ENCODE measurements at regions of chr11 and their contacts with region 1.

Region 1: DNA sequence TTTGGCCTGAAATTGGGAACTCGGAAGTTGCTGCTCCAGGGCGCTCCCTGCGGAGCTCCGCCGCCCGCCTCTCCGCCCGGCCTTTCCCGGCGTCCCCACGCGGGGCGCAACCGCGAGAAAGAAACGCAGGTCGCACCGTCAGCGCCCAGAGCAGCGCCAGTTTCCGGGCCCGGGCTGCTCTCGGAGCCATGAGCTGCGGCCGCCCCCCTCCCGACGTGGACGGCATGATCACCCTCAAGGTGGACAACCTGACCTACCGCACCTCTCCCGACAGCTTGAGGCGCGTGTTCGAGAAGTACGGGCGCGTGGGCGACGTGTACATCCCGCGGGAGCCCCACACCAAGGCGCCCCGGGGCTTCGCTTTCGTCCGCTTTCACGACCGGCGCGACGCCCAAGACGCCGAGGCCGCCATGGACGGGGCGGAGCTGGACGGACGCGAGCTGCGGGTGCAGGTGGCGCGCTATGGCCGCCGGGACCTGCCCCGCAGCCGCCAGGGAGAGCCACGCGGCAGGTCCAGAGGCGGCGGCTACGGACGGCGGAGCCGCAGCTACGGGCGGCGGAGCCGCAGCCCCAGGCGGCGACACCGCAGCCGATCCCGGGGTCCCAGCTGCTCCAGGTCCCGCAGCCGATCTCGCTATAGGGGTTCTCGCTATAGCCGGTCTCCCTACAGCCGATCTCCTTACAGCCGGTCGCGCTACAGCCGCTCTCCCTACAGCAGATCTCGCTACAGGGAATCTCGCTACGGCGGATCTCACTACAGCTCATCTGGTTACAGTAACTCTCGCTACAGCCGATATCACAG is 521 bp downstream of the SRSF8 start:
- DNase-seq: peak; percentile 82
- H3K4me3 Mint-ChIP-seq: peak overlapping the region; percentile 96
- H3K27ac Mint-ChIP-seq: peak overlapping the region; percentile 91
- H3K4me1 Mint-ChIP-seq: peaks cover 8% of the 10 kb centered on the region
- H3K27me3 Mint-ChIP-seq: no peaks in the 10 kb centered on the region
- CTCF ChIP-seq: peak; percentile 42

Region 2: GRCh38 chr11:94973099-94973968 is 93.9 kb before region 1 on chr11 and contains the starts of genes CWC15 and KDM4D:
- CTCF ChIA-PET with region 1: interaction called, 3 read pairs
- intact Hi-C with region 1: loop called (anchors 2 kb)
- DNase-seq: peak; percentile 88
- H3K4me3 Mint-ChIP-seq: peak within 1 kb of the TSS; percentile 98
- H3K27ac Mint-ChIP-seq: peak within 1 kb of the TSS; percentile 98
- H3K4me1 Mint-ChIP-seq: peaks cover 9% of the 10 kb centered on the region
- H3K27me3 Mint-ChIP-seq: no peaks in the 10 kb centered on the region
- CTCF ChIP-seq: no peak
- total RNA-seq, gene CWC15: 38.8 and 48.6 TPM in 2 replicates
- total RNA-seq, gene KDM4D: 0.68 and 1.2 TPM in 2 replicates

Region 3: DNA sequence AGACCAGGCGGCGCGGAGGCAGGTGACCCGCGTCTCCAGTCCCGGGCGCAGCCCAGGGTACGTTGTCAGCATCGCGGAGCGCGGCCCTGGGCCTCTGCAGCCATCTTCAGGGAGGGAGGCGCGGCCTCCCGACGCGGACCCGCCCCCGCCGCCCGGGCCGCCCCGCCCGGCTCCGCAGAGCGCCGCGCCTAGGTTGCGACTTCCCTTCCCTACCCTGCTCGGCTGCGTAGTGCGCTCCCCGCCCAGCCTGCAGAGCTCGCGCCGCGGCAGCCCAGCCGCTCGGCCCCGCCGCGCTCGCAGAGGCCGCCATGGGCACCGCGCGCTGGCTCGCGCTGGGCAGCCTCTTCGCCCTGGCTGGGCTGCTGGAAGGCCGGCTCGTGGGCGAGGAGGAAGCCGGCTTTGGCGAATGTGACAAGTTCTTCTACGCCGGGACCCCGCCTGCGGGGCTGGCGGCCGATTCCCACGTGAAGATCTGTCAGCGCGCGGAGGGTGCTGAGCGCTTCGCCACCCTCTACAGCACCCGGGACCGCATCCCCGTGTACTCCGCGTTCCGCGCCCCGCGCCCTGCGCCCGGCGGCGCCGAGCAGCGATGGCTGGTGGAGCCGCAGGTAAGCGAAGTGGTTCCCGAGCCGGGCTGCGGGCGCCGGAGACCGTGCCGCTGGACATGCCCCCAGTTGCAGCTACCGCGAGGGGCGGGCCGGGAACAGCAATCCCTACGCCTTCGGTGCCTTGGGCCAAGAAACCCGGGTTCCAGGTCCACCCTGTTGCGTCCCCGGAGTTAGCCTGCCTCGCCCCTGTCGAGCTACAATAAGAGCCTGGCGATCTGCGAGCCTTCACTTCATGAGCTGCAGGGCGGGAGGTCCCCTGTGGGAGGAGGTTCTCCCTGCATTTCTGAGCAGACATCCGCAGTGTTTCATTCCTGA is 22.6 kb after region 1 on chr11 and contains the start of gene ENDOD1:
- CTCF ChIA-PET with region 1: interaction called, 11 read pairs
- intact Hi-C with region 1: loop called (anchors 2 kb)
- DNase-seq: peak; percentile 81
- H3K4me3 Mint-ChIP-seq: peak within 1 kb of the TSS; percentile 93
- H3K27ac Mint-ChIP-seq: peak within 1 kb of the TSS; percentile 82
- H3K4me1 Mint-ChIP-seq: peaks cover 58% of the 10 kb centered on the region
- H3K27me3 Mint-ChIP-seq: no peaks in the 10 kb centered on the region
- CTCF ChIP-seq: no peak
- total RNA-seq, gene ENDOD1: 29.4 and 30.3 TPM in 2 replicates

Region 4: GRCh38 chr11:95134491-95134890 is 67.3 kb after region 1 on chr11:
- CTCF ChIA-PET with region 1: interaction called, 4 read pairs
- intact Hi-C with region 1: loop called (anchors 5 kb)
- DNase-seq: no peak
- H3K4me3 Mint-ChIP-seq: no peak overlapping the region
- H3K27ac Mint-ChIP-seq: no peak overlapping the region
- H3K4me1 Mint-ChIP-seq: no peaks in the 10 kb centered on the region
- H3K27me3 Mint-ChIP-seq: no peaks in the 10 kb centered on the region
- CTCF ChIP-seq: no peak

Region 5: DNA sequence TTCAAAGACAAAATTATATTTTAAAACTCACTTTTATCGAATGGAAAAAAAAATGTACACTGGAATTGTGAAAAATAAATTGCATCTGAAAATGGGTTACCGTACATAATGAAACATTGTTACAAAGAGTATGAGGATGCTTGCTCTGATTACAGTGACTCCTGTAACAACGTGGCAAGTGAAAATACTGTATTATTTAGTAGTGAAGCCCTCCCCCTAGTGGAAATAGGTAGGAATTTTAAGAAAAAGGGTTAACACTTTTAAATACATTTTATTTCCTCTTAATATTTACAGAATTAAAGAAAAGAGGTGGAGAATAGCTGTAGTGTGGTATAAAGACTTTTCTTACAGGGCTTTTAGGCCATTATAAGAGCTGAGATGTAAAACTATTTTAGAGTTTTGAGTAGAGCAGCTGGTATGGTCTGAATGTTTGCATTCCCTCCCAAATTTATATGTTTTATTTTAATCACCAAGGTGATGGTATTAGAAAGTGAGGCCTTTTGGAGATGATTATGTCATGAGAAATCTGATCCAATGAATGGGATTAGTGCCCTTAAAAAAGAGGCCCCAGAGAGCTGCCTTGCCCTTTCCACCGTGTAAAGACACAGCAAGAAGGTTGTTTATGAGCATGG is 697.1 kb after region 1 on chr11:
- CTCF ChIA-PET with region 1: interaction called, 5 read pairs
- intact Hi-C with region 1: loop called (anchors 5 kb)
- DNase-seq: no peak
- H3K4me3 Mint-ChIP-seq: no peak overlapping the region
- H3K27ac Mint-ChIP-seq: no peak overlapping the region
- H3K4me1 Mint-ChIP-seq: no peaks in the 10 kb centered on the region
- H3K27me3 Mint-ChIP-seq: no peaks in the 10 kb centered on the region
- CTCF ChIP-seq: peak; percentile 55

Measured in Calu3 (cell line).